Gastrocnemius medialis (tissue), 4 donors: ENCODE measurements at regions of chr19 and their contacts with region 1.

Region 1: GRCh38 chr19:3375221-3376090 is 9.1 kb downstream of the NFIC start:
- DNase-seq: peak; percentile 99
- ATAC-seq: peak; percentile 68 to 72
- H3K4me3 ChIP-seq: peak overlapping the region; percentile 32 to 56 (median 45)
- H3K27ac ChIP-seq: peak overlapping the region; percentile 98 to 100 (median 98)
- H3K4me1 ChIP-seq: peaks cover 54 to 64% of the 10 kb centered on the region in 2 donors
- H3K27me3 ChIP-seq: no peaks in the 10 kb centered on the region
- CTCF ChIP-seq: no peak
- POLR2A ChIP-seq: peak; percentile 66 to 75

Region 2: GRCh38 chr19:3387645-3388589 is 12.5 kb after region 1 on chr19:
- in situ Hi-C with region 1: no loop called
- intact Hi-C with region 1: loop called (anchors 1 kb)
- DNase-seq: peak; percentile 93 to 98
- ATAC-seq: peak; percentile 50 to 58
- H3K4me3 ChIP-seq: peak overlapping the region in 3 of 4 donors; percentile 14 to 34 (median 28)
- H3K27ac ChIP-seq: peak overlapping the region; percentile 98 to 100 (median 98)
- H3K4me1 ChIP-seq: peaks cover 73 to 86% of the 10 kb centered on the region in 2 donors
- H3K27me3 ChIP-seq: no peaks in the 10 kb centered on the region
- CTCF ChIP-seq: no peak
- POLR2A ChIP-seq: peak; percentile 67 to 68

Region 3: DNA sequence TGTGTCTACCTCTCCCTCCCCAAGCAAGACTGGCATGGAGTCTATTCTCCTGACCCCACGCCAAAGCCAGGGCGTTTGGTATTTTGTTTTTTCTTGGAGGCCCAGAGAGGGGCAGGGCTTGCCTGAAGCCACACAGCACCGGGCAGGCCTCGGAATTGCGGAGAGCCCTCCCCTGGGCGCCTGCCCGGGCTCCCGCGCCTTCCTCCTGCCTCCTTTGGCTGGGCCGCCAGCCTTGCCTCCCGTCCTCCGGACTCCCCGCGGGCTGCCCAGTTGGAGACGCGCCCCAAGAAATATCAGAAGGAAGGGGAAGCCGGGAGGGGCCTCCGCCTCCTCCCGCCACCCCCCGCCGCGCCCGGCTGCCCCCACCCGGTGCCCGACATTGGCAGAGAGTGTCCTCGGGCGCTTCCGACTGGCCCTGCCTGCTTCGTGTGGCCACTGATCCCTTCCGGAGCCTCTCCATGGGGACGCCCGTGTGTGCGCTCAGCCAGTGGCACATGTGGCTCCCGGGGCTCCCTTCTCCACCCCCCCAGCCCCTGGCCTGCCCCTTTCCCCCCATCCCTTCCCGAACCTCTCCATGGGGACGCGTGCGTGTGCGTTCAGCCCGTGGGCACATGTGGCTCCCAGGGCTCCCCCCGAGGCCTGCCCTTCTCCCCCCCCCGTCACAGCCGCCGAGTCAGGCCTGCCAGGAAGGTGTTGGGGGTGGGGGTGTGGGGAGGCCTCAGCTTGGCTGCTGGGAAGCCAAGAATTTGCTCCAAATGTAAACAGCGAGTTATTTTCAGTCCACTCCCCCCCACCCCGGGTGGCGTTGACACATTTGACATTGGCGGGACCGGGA is 28.2 kb after region 1 on chr19:
- in situ Hi-C with region 1: no loop called
- intact Hi-C with region 1: loop called (anchors 1 kb)
- DNase-seq: peak; percentile 89 to 94
- ATAC-seq: peak; percentile 38 to 46
- H3K4me3 ChIP-seq: peak overlapping the region; percentile 56 to 60 (median 58)
- H3K27ac ChIP-seq: peak overlapping the region; percentile 98 to 100 (median 98)
- H3K4me1 ChIP-seq: peaks cover 63 to 81% of the 10 kb centered on the region in 2 donors
- H3K27me3 ChIP-seq: no peaks in the 10 kb centered on the region
- CTCF ChIP-seq: no peak
- POLR2A ChIP-seq: peak; percentile 31 to 39

Region 4: DNA sequence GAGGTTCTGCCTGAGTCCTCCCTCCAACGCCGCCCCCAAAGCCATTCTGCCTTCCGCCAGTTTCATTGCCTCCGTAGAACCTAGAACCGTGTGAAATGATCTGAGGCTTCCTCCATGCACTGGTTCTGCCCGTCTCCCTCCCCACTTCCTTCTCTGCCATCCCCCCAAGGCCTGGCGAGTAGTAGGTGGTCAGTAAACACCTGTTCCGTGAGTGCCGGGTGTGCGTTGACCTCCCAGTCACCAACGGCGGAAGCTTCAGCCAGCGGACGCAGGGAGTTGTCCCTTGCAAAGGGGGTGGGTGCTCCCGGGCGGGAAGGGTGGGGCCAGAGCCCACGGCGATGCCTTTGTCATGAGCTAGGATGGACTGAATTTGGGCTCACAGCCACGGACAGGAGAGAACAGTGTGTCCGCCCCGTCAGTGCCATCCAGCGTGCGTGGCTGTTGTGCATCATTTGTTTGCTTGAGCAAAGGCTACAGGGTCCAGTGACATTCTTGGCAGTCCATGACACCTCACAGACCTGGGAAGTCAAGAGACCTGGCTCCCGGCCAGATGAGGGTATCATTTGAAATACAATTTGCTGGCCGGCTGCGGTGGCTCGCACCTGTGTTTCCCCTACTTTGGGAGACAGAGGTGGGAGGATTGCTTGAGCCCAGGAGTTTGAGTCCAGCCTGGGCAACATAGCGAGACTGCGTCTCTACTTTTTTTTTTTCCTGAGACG is 34.0 kb after region 1 on chr19:
- in situ Hi-C with region 1: no loop called
- intact Hi-C with region 1: loop called (anchors 1 kb)
- DNase-seq: peak; percentile 99 to 100
- ATAC-seq: peak; percentile 73 to 74
- H3K4me3 ChIP-seq: peak overlapping the region; percentile 53 to 73 (median 58)
- H3K27ac ChIP-seq: peak overlapping the region; percentile 98 to 100 (median 98)
- H3K4me1 ChIP-seq: peaks cover 69 to 86% of the 10 kb centered on the region in 2 donors
- H3K27me3 ChIP-seq: no peaks in the 10 kb centered on the region
- CTCF ChIP-seq: no peak
- POLR2A ChIP-seq: peak; percentile 88 to 92

Region 5: GRCh38 chr19:3450796-3451411 is 75.4 kb after region 1 on chr19:
- in situ Hi-C with region 1: no loop called
- intact Hi-C with region 1: loop called (anchors 2 kb)
- DNase-seq: peak; percentile 80 to 93
- ATAC-seq: peak; percentile 87 to 92
- H3K4me3 ChIP-seq: no peak overlapping the region
- H3K27ac ChIP-seq: peak overlapping the region; percentile 88 to 91 (median 89)
- H3K4me1 ChIP-seq: peaks cover 5 to 13% of the 10 kb centered on the region in 2 donors
- H3K27me3 ChIP-seq: no peaks in the 10 kb centered on the region
- CTCF ChIP-seq: no peak
- POLR2A ChIP-seq: peak in 1 of 2 donors; percentile 47

Region 6: GRCh38 chr19:3516675-3517207 is 141.3 kb after region 1 on chr19:
- in situ Hi-C with region 1: no loop called
- intact Hi-C with region 1: no loop called
- DNase-seq: peak; percentile 16 to 71
- ATAC-seq: peak; percentile 55 to 75
- H3K4me3 ChIP-seq: no peak overlapping the region
- H3K27ac ChIP-seq: peak overlapping the region; percentile 16 to 52 (median 42)
- H3K4me1 ChIP-seq: peaks cover 10 to 15% of the 10 kb centered on the region in 2 donors
- H3K27me3 ChIP-seq: no peaks in the 10 kb centered on the region
- CTCF ChIP-seq: no peak
- POLR2A ChIP-seq: no peak